ENCODE measurements at regions of chr6 and their contacts with region 1.

Region 1: DNA sequence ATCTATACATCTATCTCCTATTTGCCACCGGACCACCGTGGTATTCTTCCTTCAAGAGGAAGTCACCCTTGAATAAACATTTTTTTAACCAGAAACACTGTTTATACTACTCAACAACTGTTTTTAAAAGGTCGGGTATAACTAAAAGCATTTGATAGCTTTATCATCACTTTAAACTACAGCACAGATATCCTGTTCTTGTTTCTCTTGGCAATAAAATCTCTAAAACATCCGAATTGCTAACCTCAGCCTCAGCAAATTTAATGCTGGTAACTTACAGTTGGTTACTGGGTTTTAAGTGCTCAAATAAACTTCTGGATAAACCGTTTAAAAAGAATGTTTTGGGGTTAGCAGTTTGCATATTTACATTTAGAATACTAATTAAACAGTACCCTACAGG is 20.4 kb downstream of the ZUP1 start:
- DNase-seq: no peak
- ATAC-seq: no peak
- H3K4me3 ChIP-seq: no peak overlapping the region
- H3K4me3 Mint-ChIP-seq: no peak overlapping the region
- H3K27ac ChIP-seq: no peak overlapping the region
- H3K27ac Mint-ChIP-seq: no peak overlapping the region
- H3K4me1 ChIP-seq: no peaks in the 10 kb centered on the region
- H3K4me1 Mint-ChIP-seq: peaks cover 10% of the 10 kb centered on the region
- H3K27me3 ChIP-seq: no peaks in the 10 kb centered on the region
- H3K27me3 Mint-ChIP-seq: no peaks in the 10 kb centered on the region
- CTCF ChIP-seq: no peak

Region 2: DNA sequence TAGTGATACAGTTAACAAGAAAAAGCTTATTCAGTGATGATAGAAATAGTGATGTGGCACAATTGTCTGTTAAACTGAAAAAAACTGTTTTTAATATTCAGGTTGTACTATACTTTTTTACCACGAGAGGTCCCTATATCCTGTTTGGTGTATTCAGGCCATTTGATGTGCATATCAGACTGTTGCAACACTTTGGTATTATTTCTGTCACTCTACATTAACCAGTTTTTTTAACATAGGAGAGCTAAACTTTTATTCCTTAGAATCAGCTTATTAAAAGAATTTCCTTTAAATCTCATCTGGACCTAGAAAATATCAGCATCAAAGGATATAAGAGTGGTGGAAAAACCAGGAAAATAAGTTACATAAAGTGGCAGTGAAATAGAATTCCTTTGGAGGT is 431.1 kb before region 1 on chr6:
- CTCF ChIA-PET with region 1: interaction called, 5 read pairs
- POLR2A ChIA-PET with region 1: no interaction called
- intact Hi-C with region 1: loop called in 1 of 2 experiments (anchors 5 kb)
- DNase-seq: peak in 3 of 14 experiments; percentile 50 to 61 (median 59)
- ATAC-seq: peak; percentile 95
- H3K4me3 ChIP-seq: no peak overlapping the region
- H3K4me3 Mint-ChIP-seq: no peak overlapping the region
- H3K27ac ChIP-seq: no peak overlapping the region
- H3K27ac Mint-ChIP-seq: no peak overlapping the region
- H3K4me1 ChIP-seq: no peaks in the 10 kb centered on the region
- H3K4me1 Mint-ChIP-seq: peaks cover 7% of the 10 kb centered on the region
- H3K27me3 ChIP-seq: no peaks in the 10 kb centered on the region
- H3K27me3 Mint-ChIP-seq: no peaks in the 10 kb centered on the region
- CTCF ChIP-seq: peak; percentile 64

Region 3: DNA sequence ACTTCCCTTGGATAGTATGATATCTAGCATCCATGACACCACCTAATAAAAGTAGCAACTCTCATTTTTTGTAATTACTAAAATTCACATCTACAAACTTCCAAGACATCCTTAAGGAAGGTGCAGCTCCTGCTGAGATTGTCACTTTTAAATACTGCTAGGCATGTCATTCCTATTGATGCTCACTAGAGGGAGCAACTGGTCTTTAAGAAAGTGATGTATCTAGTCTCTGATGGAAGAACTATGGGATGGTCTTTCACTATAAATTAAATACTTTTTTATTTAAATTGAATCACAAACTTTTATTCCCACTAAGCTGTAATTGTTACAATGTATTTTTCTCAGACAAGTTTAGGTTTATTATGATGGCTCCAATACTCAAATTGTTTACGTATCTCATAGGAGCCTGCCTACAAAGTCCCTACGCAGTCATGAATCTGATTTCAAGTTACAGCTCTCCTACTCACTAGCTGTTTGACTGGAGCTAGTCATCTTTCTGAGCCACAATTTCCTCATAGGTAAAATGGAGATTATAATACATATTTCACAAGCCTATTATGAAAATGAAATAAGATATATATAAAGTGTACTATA is 360.4 kb before region 1 on chr6:
- CTCF ChIA-PET with region 1: no interaction called
- POLR2A ChIA-PET with region 1: no interaction called
- intact Hi-C with region 1: loop called in 1 of 2 experiments (anchors 5 kb)
- DNase-seq: peak in 3 of 14 experiments; percentile 59 to 71 (median 67)
- ATAC-seq: peak; percentile 87
- H3K4me3 ChIP-seq: no peak overlapping the region
- H3K4me3 Mint-ChIP-seq: no peak overlapping the region
- H3K27ac ChIP-seq: no peak overlapping the region
- H3K27ac Mint-ChIP-seq: no peak overlapping the region
- H3K4me1 ChIP-seq: no peaks in the 10 kb centered on the region
- H3K4me1 Mint-ChIP-seq: no peaks in the 10 kb centered on the region
- H3K27me3 ChIP-seq: no peaks in the 10 kb centered on the region
- H3K27me3 Mint-ChIP-seq: no peaks in the 10 kb centered on the region
- CTCF ChIP-seq: peak; percentile 96

Measured in CD4-positive, alpha-beta T cell (primary cell).